ENCODE measurements at regions of chr14 and their contacts with region 1.

Region 1: DNA sequence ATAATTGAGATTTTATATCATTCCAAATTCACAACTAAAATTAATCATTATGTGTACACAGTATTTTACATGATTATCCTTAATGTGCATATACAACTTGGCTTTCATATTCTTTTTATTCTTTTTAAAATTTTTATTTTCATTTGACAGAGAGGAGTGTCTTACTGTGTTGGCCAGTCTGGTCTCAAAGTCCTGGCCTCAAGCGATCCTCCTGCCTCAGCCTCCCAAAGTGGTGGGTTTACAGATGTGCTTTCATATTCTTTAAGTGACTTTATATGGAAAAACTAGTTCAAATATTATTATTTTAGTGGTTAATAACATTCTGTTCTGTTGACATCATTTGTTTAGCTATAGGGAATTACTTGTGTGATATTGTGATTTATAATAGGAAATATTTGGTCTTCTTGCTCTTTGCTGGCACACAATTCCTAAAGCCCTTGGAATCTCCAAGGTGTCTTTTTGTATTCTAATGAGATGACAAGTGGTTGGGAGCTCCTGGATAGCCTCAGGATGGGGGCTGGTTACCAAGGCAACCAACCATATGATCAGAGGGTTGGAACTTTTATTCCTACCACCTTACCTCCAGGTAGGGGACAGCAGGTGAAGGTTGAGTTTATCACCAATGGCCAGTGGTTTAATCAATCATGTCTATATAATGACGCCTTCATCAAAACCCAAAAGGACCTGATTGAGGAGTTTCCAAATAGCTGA is 16.0 kb upstream of the ZNF410 start:
- DNase-seq: no peak
- H3K4me3 ChIP-seq: no peak overlapping the region
- H3K27ac ChIP-seq: no peak overlapping the region
- H3K4me1 ChIP-seq: no peaks in the 10 kb centered on the region
- H3K27me3 ChIP-seq: no peaks in the 10 kb centered on the region
- CTCF ChIP-seq: no peak

Region 2: DNA sequence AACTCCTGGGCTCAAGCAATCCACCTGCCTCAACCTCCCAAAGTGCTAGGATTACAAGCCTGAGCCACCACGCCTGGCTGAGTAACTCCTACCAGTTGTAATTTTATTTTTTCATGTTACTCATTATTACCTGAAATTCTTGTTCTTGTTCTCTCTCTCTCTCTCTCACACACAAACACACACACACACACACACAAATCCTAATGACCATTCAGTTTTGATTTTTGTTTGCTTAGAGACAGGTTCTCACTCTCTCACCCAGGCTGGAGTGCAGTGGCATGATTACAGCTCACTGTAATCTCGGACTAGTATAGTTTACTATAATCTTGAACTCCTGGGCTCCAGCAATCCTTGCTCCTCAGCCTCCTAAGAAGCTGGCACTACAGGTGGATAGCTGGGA is 195.6 kb before region 1 on chr14:
- CTCF ChIA-PET with region 1: interaction called, 16 read pairs
- dilution Hi-C with region 1: no loop called
- in situ Hi-C with region 1: no loop called
- intact Hi-C with region 1: no loop called
- DNase-seq: no peak
- H3K4me3 ChIP-seq: no peak overlapping the region
- H3K27ac ChIP-seq: no peak overlapping the region
- H3K4me1 ChIP-seq: no peaks in the 10 kb centered on the region
- H3K27me3 ChIP-seq: no peaks in the 10 kb centered on the region
- CTCF ChIP-seq: no peak